Dorsolateral prefrontal cortex (tissue), 120 donors: ENCODE measurements at regions of chr1 and their contacts with region 1.

Region 1: GRCh38 chr1:17125756-17126237 is 6.5 kb upstream of the PADI2 start:
- DNase-seq: peak; percentile 83 to 91 (median 88)
- H3K4me3 ChIP-seq: peak overlapping the region in 32 of 59 donors; percentile 11 to 53 (median 35)
- H3K27ac ChIP-seq: peak overlapping the region in 6 of 59 donors; percentile 9 to 67 (median 46)
- H3K27me3 ChIP-seq: no peaks in the 10 kb centered on the region
- CTCF ChIP-seq: peak; percentile 86 to 99 (median 96)

Region 2: DNA sequence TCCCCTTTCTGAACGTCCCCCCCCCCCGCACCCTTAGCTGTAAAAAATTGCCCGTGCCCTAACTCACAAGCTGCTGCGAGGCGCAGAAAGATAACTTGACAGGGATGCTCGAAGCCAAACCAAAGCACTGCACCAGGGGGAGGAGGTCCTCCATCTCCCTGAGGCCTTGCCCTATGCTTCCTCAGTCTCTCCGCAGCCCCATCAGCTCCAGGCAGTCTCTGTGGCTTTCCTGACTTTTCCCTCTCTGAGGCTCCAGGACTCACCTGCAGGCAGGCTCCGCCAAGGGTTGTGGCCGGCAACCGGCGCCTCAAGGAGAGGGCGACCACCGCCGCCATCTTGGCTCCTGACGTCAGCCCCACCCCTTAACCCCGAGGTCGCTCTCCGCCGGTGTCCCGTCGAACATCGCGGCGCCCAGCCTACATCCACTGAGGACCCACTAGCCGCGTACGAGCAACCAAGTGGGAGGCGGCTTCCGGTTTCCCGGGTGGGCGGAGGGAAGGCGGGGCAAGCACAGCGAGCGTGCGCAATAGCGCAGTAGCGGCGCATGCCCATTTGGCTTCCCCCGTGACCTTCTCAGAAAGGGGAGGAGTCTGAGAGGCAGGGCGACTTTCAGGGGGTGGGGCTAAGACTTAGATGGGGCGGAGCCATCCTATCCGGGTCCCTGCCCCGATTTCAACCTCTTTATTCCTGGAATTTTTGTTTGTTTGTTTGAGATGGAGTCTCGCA is 71.9 kb before region 1 on chr1 and contains the start of gene SDHB:
- intact Hi-C with region 1: loop called in 1 of 2 experiments (anchors 2 kb)
- DNase-seq: peak; percentile 96 to 99 (median 98)
- H3K4me3 ChIP-seq: peak within 1 kb of the TSS; percentile 51 to 98 (median 85)
- H3K27ac ChIP-seq: peak within 1 kb of the TSS in 58 of 59 donors; percentile 37 to 98 (median 87)
- H3K27me3 ChIP-seq: no peaks in the 10 kb centered on the region
- CTCF ChIP-seq: peak in 34 of 56 donors; percentile 7 to 54 (median 27)
- total RNA-seq, gene SDHB: 48.8 to 115 (median 83.6) TPM

Region 3: GRCh38 chr1:17059739-17060460 is 65.9 kb before region 1 on chr1:
- intact Hi-C with region 1: loop called in 1 of 2 experiments (anchors 1 kb)
- DNase-seq: peak; percentile 51 to 83 (median 78)
- H3K4me3 ChIP-seq: peak overlapping the region in 33 of 59 donors; percentile 0 to 50 (median 16)
- H3K27ac ChIP-seq: peak overlapping the region in 56 of 59 donors; percentile 1 to 86 (median 68)
- H3K27me3 ChIP-seq: no peaks in the 10 kb centered on the region
- CTCF ChIP-seq: peak; percentile 39 to 96 (median 86)

Region 4: DNA sequence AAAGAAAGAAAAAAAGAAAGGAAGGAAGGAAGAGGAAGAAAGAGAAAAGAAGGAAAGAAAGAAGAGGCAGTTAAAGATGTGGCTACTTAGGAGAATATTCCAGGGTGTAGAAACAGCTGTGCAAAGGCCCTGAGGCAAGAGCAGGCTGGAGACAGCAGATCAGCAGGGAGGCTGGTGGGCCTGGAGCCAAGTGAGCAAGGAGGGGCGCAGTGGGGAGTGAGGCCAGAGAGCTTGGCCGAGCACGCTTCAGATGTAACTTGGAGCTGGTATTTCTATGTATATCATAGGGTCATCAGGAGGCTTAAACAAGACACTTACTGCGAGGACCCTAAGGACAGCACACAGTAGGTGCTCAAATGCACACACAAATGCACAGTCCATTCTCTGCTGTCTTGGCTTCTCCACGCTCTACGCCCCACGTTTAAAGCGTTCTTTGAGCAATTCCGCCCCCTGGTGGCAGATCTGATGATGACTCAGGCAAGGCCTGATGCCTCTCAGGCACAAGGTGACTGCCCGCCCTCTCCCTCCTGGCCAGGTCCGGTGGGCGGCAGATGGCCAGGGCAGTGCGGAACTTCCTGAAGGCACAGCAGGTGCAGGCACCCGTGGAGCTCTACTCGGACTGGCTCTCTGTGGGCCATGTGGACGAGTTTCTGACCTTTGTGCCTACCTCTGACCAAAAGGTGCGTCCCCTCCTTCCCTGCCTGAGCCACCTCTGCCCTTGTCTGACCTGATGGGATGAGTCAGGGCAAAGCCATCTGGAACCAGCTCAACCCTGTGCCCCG is 111.2 kb after region 1 on chr1:
- intact Hi-C with region 1: loop called (anchors 1 to 2 kb)
- DNase-seq: peak; percentile 79 to 93 (median 87)
- H3K4me3 ChIP-seq: no peak overlapping the region
- H3K27ac ChIP-seq: no peak overlapping the region
- H3K27me3 ChIP-seq: peaks cover 0 to 6% (median 0%) of the 10 kb centered on the region in 45 donors
- CTCF ChIP-seq: peak; percentile 82 to 98 (median 92)

Region 5: DNA sequence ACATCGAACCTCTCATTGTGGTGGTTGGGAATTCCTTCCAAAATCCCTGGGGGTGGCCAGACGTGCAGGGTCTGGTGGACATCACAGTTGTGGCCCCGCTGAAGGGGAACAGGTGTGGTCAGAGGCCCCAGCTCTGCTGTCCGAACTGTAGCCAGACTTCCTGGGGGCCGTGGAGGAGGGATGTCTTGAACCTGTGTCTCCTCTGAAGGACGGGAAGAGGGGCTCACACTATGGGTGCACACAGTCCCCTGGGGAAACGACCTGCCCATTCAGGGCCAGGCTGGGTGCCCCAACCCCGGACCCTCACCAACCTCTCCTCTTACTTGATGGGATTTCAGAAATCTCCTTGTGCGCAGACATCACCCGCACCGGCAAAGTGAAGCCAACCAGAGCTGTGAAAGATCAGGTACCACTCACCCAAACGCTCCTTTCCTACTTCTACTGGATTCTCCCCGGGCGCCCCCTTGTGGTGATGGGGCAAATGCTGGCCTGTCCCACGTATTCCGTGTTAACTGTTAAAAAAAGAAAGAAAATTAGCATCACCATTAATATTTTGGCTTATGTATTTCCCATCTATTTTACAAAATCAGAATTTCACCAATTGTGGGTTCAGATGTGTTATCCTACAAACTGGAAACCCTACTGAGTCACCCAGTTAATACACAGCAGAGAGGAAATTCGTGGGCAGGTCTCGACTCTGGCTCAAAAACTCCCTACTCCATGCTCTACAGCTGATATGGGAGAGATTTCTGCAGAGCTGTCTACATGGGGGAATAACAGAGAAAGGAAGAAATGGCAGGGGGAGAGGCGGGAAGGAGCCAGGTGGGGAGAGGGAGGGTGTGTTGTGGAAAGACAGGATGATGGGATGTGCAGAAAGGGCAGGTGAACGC is 210.3 kb after region 1 on chr1:
- intact Hi-C with region 1: loop called (anchors 2 to 5 kb)
- DNase-seq: peak in 8 of 10 donors; percentile 39 to 58 (median 47)
- H3K4me3 ChIP-seq: no peak overlapping the region
- H3K27ac ChIP-seq: no peak overlapping the region
- H3K27me3 ChIP-seq: peaks cover 0 to 20% (median 0%) of the 10 kb centered on the region in 45 donors
- CTCF ChIP-seq: peak; percentile 44 to 85 (median 72)

Region 6: DNA sequence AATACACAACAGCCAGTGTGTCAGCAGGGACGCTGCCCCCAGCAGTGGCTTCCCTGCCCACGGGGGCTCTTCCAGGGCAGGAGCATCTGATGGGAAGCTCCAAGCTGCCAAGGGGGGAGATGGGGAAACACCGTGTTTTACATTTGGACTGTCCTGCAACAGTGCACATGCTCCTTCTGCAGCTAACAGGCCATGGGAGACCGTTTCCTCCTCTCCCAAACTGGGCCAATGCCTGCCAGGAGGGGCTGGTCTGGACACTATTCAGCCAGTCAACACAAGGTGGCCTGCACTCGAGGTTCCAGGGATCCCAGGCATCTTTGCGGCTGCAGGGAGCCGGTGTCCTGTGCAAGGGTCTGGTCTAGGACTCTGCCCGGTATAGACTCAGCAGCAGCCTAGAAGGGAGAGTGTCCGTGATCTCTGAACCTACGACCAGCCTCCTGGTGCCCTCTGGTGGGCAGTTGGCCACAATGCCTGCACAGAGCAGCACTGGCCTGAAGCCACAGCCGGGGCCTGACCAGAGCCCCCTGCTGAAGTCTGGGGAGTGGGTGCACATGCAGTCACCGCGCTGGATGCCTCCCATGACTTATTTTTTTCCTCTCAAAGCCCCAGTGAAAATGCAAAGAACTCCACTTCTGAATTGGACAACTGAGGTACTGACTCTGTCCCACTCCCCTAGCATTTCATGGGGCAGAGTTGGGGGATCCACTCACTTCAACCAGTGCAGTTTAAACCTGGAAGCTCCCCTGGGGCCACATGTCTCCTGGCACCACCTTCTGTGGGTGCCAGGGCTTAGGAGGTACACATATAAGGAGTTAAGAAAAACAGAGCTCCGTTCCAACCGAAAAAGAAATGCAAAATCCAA is 280.3 kb after region 1 on chr1:
- intact Hi-C with region 1: loop called (anchors 2 to 5 kb)
- DNase-seq: peak; percentile 50 to 75 (median 62)
- H3K4me3 ChIP-seq: no peak overlapping the region
- H3K27ac ChIP-seq: no peak overlapping the region
- H3K27me3 ChIP-seq: no peaks in the 10 kb centered on the region
- CTCF ChIP-seq: peak; percentile 28 to 84 (median 71)

Region 7: GRCh38 chr1:17439250-17440073 is 313.7 kb after region 1 on chr1 and contains the start of gene RCC2:
- intact Hi-C with region 1: loop called in 1 of 2 experiments (anchors 10 kb)
- DNase-seq: peak; percentile 36 to 82 (median 57)
- H3K4me3 ChIP-seq: peak within 1 kb of the TSS; percentile 61 to 87 (median 75)
- H3K27ac ChIP-seq: peak within 1 kb of the TSS; percentile 6 to 95 (median 84)
- H3K27me3 ChIP-seq: no peaks in the 10 kb centered on the region
- CTCF ChIP-seq: peak in 11 of 56 donors; percentile 3 to 27 (median 12)
- total RNA-seq, gene RCC2: 22.3 to 50.7 (median 35.3) TPM